ENCODE measurements at regions of chr12 and their contacts with region 1.

Region 1: GRCh38 chr12:75390899-75391538 is at the start of gene GLIPR1L2:
- DNase-seq: peak; percentile 97
- H3K4me3 ChIP-seq: peak within 1 kb of the TSS; percentile 53 to 68 (median 65)
- H3K27ac ChIP-seq: peak within 1 kb of the TSS; percentile 85 to 93 (median 88)
- H3K4me1 ChIP-seq: peaks cover 23 to 33% (median 32%) of the 10 kb centered on the region in 4 donors
- H3K27me3 ChIP-seq: no peaks in the 10 kb centered on the region
- CTCF ChIP-seq: peak; percentile 74 to 88 (median 80)
- EP300 ChIP-seq: no peak
- POLR2A ChIP-seq: peak; percentile 70
- total RNA-seq, gene GLIPR1L2: 0.17 to 4.5 (median 1.0) TPM

Region 2: DNA sequence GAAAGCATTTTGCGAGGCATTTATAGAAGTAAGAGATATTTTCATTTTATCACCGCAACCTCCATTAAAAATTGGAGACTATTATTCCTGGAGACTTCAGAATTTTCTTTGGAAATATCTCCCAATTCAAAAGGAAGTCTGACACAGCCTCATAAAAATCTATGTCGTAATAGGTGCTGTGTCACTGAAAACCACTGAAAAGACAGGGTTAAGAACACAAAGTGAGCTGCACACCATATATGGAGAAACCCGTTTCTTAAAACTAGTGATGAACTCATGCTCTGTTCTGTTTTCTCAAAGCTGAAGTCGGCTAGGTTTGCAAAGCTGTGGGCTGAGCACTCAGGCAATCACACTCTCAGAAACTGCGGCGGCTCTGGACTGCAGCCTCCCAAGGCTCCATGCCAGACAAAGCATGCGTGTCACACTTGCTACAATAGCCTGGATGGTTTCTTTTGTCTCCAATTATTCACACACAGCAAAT is 89.5 kb after region 1 on chr12 and contains the start of gene GLIPR1:
- intact Hi-C with region 1: loop called (anchors 5 kb)
- DNase-seq: peak; percentile 93
- H3K4me3 ChIP-seq: peak within 1 kb of the TSS; percentile 44 to 66 (median 59)
- H3K27ac ChIP-seq: peak within 1 kb of the TSS; percentile 77 to 84 (median 80)
- H3K4me1 ChIP-seq: peaks cover 0 to 48% (median 39%) of the 10 kb centered on the region in 4 donors
- H3K27me3 ChIP-seq: no peaks in the 10 kb centered on the region
- CTCF ChIP-seq: no peak
- EP300 ChIP-seq: no peak
- POLR2A ChIP-seq: peak; percentile 54
- total RNA-seq, gene GLIPR1: 10.9 to 19.5 (median 15.8) TPM

Region 3: DNA sequence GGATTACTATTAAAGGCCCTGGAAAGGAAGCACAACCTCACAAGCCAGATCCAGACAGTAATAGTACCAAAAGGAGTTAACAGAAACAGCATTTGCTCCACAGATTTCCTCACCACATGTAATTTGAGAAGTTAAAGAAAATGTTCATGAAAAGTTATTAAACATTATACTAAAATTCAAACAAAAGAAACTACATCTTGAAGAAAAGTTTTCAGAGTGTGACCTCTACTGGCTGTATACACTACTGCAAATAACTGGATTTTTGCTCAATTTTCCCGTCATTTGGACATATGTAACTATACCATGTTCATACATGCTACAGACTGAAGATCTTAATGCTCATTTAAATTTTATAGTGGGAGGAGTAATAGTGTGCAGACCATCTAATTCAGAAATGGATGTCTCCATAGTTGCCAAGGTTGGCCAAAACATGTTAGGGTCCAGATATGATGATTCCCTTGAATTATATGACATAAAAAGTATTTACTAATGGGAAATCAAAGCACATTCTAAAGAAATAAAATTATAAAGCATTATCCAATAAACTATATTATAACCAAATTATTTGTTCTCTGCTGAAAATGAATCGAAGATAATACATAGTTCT is 114.8 kb after region 1 on chr12:
- intact Hi-C with region 1: loop called (anchors 10 kb)
- DNase-seq: no peak
- H3K4me3 ChIP-seq: no peak overlapping the region
- H3K27ac ChIP-seq: no peak overlapping the region
- H3K4me1 ChIP-seq: peaks cover 16 to 29% (median 26%) of the 10 kb centered on the region in 4 donors
- H3K27me3 ChIP-seq: no peaks in the 10 kb centered on the region
- CTCF ChIP-seq: peak; percentile 38 to 57 (median 52)
- EP300 ChIP-seq: no peak
- POLR2A ChIP-seq: no peak

Region 4: GRCh38 chr12:75672200-75672599 is 281.2 kb after region 1 on chr12:
- intact Hi-C with region 1: no loop called
- DNase-seq: no peak
- H3K4me3 ChIP-seq: no peak overlapping the region
- H3K27ac ChIP-seq: no peak overlapping the region
- H3K4me1 ChIP-seq: no peaks in the 10 kb centered on the region
- H3K27me3 ChIP-seq: no peaks in the 10 kb centered on the region
- CTCF ChIP-seq: no peak
- EP300 ChIP-seq: no peak
- POLR2A ChIP-seq: no peak